ENCODE measurements at regions of chr3 and their contacts with region 1.

Region 1: GRCh38 chr3:46368569-46368968 is 2.2 kb upstream of the CCR5 start:
- DNase-seq: peak; percentile 65
- ATAC-seq: peak; percentile 22
- H3K4me3 Mint-ChIP-seq: no peak overlapping the region
- H3K27ac Mint-ChIP-seq: peak overlapping the region; percentile 32
- H3K4me1 Mint-ChIP-seq: peaks cover 36% of the 10 kb centered on the region
- H3K27me3 Mint-ChIP-seq: peaks cover 47% of the 10 kb centered on the region

Region 2: GRCh38 chr3:45978006-45978761 is 390.4 kb before region 1 on chr3:
- CTCF ChIA-PET with region 1: no interaction called
- POLR2A ChIA-PET with region 1: interaction called, 13 read pairs
- intact Hi-C with region 1: no loop called
- DNase-seq: peak; percentile 82
- ATAC-seq: peak; percentile 20
- H3K4me3 Mint-ChIP-seq: peak overlapping the region; percentile 22
- H3K27ac Mint-ChIP-seq: peak overlapping the region; percentile 91
- H3K4me1 Mint-ChIP-seq: peaks cover 71% of the 10 kb centered on the region
- H3K27me3 Mint-ChIP-seq: peaks cover 2% of the 10 kb centered on the region

Region 3: DNA sequence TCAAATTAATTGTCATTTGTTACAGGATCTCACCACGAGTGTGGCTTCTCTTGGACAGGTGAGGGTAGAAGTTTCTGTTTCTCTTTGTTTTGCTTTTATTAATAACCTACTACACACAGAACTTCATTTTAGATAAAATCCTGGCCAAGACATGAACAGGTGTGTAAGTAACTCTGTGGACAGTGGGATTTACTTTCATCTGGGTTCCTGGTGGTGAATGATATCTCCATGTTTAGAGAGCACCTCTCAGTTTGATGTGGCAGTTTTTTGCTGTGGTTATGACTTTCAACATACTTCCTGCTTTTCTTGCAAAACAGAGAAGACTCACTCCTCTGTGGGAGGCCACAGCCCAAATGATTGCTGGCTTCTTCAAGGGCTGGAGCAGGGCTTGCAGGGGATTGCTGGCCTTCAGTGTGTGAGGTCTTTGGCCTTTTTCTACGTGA is 270.2 kb before region 1 on chr3:
- CTCF ChIA-PET with region 1: interaction called, 14 read pairs
- POLR2A ChIA-PET with region 1: interaction called, 3 read pairs
- intact Hi-C with region 1: loop called (anchors 1 to 2 kb)
- DNase-seq: peak; percentile 73
- ATAC-seq: peak; percentile 76
- H3K4me3 Mint-ChIP-seq: no peak overlapping the region
- H3K27ac Mint-ChIP-seq: peak overlapping the region; percentile 62
- H3K4me1 Mint-ChIP-seq: peaks cover 31% of the 10 kb centered on the region
- H3K27me3 Mint-ChIP-seq: peaks cover 51% of the 10 kb centered on the region

Region 4: DNA sequence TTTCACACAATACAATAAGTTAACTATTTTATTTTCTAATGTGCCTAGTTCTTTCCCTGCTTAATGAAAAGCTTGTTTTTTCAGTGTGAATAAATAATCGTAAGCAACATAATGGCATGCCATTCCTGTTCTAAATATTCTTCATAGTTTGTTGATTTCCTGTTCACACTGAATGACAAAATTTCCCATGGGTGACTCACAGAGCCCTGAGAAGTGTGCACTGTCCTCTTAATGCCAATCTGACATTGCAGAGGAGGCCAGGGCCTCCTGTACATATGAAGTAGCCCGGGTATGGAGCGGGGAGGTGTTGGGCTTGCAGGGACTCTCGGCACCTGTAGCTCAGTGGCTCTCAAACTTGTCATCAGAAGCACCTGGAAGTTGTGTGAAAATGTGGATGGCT is 102.0 kb before region 1 on chr3:
- CTCF ChIA-PET with region 1: interaction called, 7 read pairs
- POLR2A ChIA-PET with region 1: interaction called, 8 read pairs
- intact Hi-C with region 1: loop called in 1 of 2 experiments (anchors 2 kb)
- DNase-seq: no peak
- ATAC-seq: no peak
- H3K4me3 Mint-ChIP-seq: no peak overlapping the region
- H3K27ac Mint-ChIP-seq: no peak overlapping the region
- H3K4me1 Mint-ChIP-seq: peaks cover 20% of the 10 kb centered on the region
- H3K27me3 Mint-ChIP-seq: peaks cover 26% of the 10 kb centered on the region

Region 5: DNA sequence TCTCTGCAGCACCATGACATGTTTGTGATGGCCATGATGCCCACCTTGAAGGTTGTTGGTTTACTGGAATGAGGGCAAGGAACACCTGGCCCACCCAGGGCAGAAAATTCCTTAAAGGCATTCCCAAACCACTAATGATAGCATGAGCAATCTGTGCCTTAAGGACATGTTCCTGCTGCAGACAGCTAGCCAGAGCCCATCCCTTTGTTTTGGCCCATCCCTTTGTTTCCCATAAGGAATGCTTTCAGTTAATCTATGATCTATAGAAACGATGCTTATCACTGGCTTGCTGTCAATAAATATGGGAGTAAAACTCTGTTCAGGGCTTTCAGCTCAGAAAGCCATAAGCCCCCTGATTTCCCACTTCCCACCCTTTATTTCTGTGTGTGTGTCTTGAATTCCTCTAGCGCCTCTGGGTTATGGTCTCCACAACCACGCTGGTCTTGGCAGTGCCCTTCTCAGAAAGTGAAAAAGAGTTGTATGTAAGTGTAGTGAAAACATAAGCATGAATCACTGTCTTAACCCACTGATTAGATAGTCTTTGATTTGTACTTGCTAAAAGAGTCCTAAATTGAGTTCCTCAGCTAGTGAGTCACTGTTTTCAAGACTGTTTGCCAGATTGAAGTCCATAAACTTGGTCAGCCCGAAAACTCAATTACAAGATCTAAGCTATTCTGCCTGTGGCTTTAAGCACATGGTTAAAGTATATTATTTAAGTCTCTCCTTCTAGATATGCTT is 33.7 kb before region 1 on chr3:
- CTCF ChIA-PET with region 1: interaction called, 3 read pairs
- POLR2A ChIA-PET with region 1: no interaction called
- intact Hi-C with region 1: loop called in 1 of 2 experiments (anchors 1 kb)
- DNase-seq: peak; percentile 24
- ATAC-seq: peak; percentile 93
- H3K4me3 Mint-ChIP-seq: no peak overlapping the region
- H3K27ac Mint-ChIP-seq: no peak overlapping the region
- H3K4me1 Mint-ChIP-seq: peaks cover 8% of the 10 kb centered on the region
- H3K27me3 Mint-ChIP-seq: peaks cover 27% of the 10 kb centered on the region

Measured in activated CD4-positive, alpha-beta T cell treated with anti-CD3 and anti-CD28 coated beads for 36 hours (primary cell).